ENCODE measurements at regions of chr14 and their contacts with region 1.

Region 1: DNA sequence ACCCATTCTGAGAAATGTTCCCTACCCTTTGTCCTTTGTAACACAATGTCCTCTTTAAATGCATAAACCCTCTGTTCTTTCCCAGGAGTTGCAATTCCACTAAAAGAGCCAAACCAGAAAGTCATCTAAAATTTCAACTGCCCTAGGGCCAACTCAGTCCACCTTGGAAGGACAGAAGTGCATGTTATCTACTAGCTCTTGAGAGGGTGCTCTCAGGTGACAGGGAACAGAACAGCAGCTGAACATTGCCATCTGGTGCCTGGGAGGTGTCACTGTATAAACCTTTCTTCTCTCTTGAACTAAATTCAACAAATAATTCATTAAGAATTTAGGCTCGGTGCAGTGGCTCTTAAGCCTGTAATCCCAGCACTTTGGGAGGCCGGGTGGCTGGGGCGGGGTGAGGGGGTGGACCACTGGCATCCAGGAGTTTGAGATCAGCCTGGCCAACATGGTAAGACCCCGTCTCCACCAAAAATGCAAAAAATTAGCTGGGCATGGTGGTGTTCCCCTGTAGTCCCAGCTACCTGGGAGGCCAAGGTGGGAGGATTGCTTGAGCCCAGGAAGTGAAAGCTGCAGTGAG is 10.3 kb upstream of the FERMT2 start:
- DNase-seq: peak in 1 of 2 experiments; percentile 56
- H3K4me3 ChIP-seq: no peak overlapping the region
- H3K27ac ChIP-seq: no peak overlapping the region
- H3K4me1 ChIP-seq: peaks cover 0 to 5% (median 0%) of the 10 kb centered on the region in 4 experiments; a peak in 1 of 7 replicates
- H3K27me3 ChIP-seq: no peaks in the 10 kb centered on the region
- CTCF ChIP-seq: peak; percentile 60 to 85 (median 78)
- EP300 ChIP-seq: no peak
- POLR2A ChIP-seq: no peak
- RAD21 ChIP-seq: peak; percentile 96

Region 2: GRCh38 chr14:52824507-52824906 is 136.6 kb before region 1 on chr14:
- CTCF ChIA-PET with region 1: interaction called, 31 read pairs
- POLR2A ChIA-PET with region 1: interaction called, 4 read pairs
- DNase-seq: no peak
- H3K4me3 ChIP-seq: no peak overlapping the region
- H3K27ac ChIP-seq: no peak overlapping the region
- H3K4me1 ChIP-seq: no peaks in the 10 kb centered on the region; a peak in 2 of 7 replicates
- H3K27me3 ChIP-seq: no peaks in the 10 kb centered on the region
- CTCF ChIP-seq: no peak
- EP300 ChIP-seq: no peak
- POLR2A ChIP-seq: no peak
- RAD21 ChIP-seq: no peak

Region 3: GRCh38 chr14:52829527-52829926 is 131.6 kb before region 1 on chr14:
- CTCF ChIA-PET with region 1: interaction called, 31 read pairs
- POLR2A ChIA-PET with region 1: interaction called, 4 read pairs
- DNase-seq: no peak
- H3K4me3 ChIP-seq: no peak overlapping the region
- H3K27ac ChIP-seq: no peak overlapping the region
- H3K4me1 ChIP-seq: peaks cover 0 to 8% (median 2%) of the 10 kb centered on the region in 4 experiments; a peak in 5 of 7 replicates
- H3K27me3 ChIP-seq: no peaks in the 10 kb centered on the region
- CTCF ChIP-seq: no peak
- EP300 ChIP-seq: no peak
- POLR2A ChIP-seq: no peak
- RAD21 ChIP-seq: no peak

Region 4: DNA sequence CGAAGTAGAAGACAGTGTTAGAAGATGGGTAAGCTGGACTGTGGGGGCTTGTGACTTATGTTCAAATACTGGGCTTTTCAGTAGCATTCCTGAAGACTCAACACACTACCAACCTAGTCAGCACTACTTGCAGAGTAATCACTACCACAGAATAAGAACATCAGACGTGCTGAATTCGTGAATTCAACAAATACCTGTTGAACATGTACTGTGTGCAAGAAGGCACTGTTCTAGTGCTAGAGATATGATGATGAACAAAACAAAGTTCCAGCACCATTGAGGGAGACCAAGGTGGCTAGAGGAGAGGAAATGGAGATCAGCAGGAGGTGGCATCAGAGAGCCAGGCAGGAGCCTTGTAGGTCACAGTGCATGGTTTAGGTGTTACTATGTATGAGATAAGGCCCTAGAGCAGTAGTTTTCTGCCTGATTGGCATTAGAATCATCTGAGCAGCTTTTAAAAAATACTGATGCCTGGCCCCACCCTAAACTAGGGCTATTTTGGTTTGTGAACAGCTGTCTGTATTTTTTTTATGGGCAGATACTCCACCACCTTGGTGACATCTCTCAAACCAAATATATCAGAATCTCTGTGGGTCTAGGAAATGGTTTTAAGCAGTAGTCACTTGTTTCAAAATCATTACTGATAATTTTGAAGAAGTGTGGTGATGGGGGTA is 37.1 kb before region 1 on chr14:
- CTCF ChIA-PET with region 1: interaction called, 12 read pairs
- POLR2A ChIA-PET with region 1: no interaction called
- DNase-seq: no peak
- H3K4me3 ChIP-seq: no peak overlapping the region
- H3K27ac ChIP-seq: no peak overlapping the region
- H3K4me1 ChIP-seq: peaks cover 0 to 6% (median 2%) of the 10 kb centered on the region in 4 experiments; a peak in 3 of 7 replicates
- H3K27me3 ChIP-seq: no peaks in the 10 kb centered on the region
- CTCF ChIP-seq: peak in 2 of 3 experiments; percentile 27 to 31; a peak in 3 of 4 replicates
- EP300 ChIP-seq: no peak
- POLR2A ChIP-seq: no peak
- RAD21 ChIP-seq: peak; percentile 42 to 55

Region 5: GRCh38 chr14:52944254-52944653 is 16.9 kb before region 1 on chr14:
- CTCF ChIA-PET with region 1: interaction called, 16 read pairs
- POLR2A ChIA-PET with region 1: interaction called, 3 read pairs
- DNase-seq: no peak
- H3K4me3 ChIP-seq: no peak overlapping the region
- H3K27ac ChIP-seq: peak overlapping the region; percentile 9; the same call in 1 of the 2 replicates
- H3K4me1 ChIP-seq: peaks cover 0 to 4% (median 0%) of the 10 kb centered on the region in 4 experiments; a peak in 1 of 7 replicates
- H3K27me3 ChIP-seq: no peaks in the 10 kb centered on the region
- CTCF ChIP-seq: no peak
- EP300 ChIP-seq: no peak
- POLR2A ChIP-seq: no peak
- RAD21 ChIP-seq: no peak

Region 6: GRCh38 chr14:53032161-53032803 is 71.1 kb after region 1 on chr14:
- CTCF ChIA-PET with region 1: no interaction called
- POLR2A ChIA-PET with region 1: no interaction called
- DNase-seq: no peak
- H3K4me3 ChIP-seq: no peak overlapping the region
- H3K27ac ChIP-seq: no peak overlapping the region
- H3K4me1 ChIP-seq: no peaks in the 10 kb centered on the region
- H3K27me3 ChIP-seq: no peaks in the 10 kb centered on the region
- CTCF ChIP-seq: no peak
- EP300 ChIP-seq: no peak
- POLR2A ChIP-seq: no peak
- RAD21 ChIP-seq: no peak

Measured in H1 (cell line).